Esophagus squamous epithelium (tissue), 5 donors: ENCODE measurements at regions of chrX and their contacts with region 1.

Region 1: DNA sequence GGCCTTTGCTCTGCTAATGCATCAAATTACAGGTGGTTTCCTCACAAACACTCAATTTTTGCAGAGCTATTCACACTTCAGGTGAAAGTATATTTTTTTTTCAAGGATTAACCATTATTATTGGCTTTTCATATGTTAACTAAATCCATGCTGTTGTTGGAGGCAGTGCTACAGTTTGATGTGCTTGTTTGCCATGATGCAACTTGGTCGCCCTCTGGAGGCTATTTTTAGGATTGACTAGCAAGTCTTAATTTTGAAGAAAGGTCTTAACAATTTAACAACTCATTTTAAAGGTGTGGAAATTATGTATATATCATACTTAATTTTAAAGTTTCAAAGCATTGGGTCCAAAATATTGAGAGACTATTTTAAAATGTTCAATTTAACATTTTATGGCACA is 168.8 kb upstream of the FAM47A start:
- DNase-seq: no peak
- H3K4me3 ChIP-seq: no peak overlapping the region
- H3K27ac ChIP-seq: no peak overlapping the region
- H3K4me1 ChIP-seq: no peaks in the 10 kb centered on the region
- H3K27me3 ChIP-seq: no peaks in the 10 kb centered on the region
- CTCF ChIP-seq: peak in 5 of 6 experiments; percentile 9 to 48 (median 36)
- POLR2A ChIP-seq: no peak

Region 2: GRCh38 chrX:33434256-33435092 is 866.4 kb before region 1 on chrX:
- intact Hi-C with region 1: loop called (anchors 10 kb)
- DNase-seq: no peak
- H3K4me3 ChIP-seq: no peak overlapping the region
- H3K27ac ChIP-seq: no peak overlapping the region
- H3K4me1 ChIP-seq: no peaks in the 10 kb centered on the region
- H3K27me3 ChIP-seq: no peaks in the 10 kb centered on the region
- CTCF ChIP-seq: peak; percentile 40 to 84 (median 57)
- POLR2A ChIP-seq: no peak

Region 3: GRCh38 chrX:34555481-34555880 is 254.6 kb after region 1 on chrX:
- intact Hi-C with region 1: no loop called
- DNase-seq: no peak
- H3K4me3 ChIP-seq: no peak overlapping the region
- H3K27ac ChIP-seq: no peak overlapping the region
- H3K4me1 ChIP-seq: no peaks in the 10 kb centered on the region
- H3K27me3 ChIP-seq: no peaks in the 10 kb centered on the region
- CTCF ChIP-seq: no peak
- POLR2A ChIP-seq: no peak